AG04450 (cell line): ENCODE measurements at regions of chr14 and their contacts with region 1.

Region 1: GRCh38 chr14:35385042-35385839 is 19.3 kb downstream of the NFKBIA start:
- DNase-seq: no peak
- H3K4me3 ChIP-seq: no peak overlapping the region
- H3K27ac ChIP-seq: peak overlapping the region; percentile 98
- H3K27me3 ChIP-seq: no peaks in the 10 kb centered on the region
- CTCF ChIP-seq: no peak

Region 2: GRCh38 chr14:35222872-35223466 is 162.3 kb before region 1 on chr14:
- CTCF ChIA-PET with region 1: no interaction called
- POLR2A ChIA-PET with region 1: no interaction called
- DNase-seq: no peak
- H3K4me3 ChIP-seq: no peak overlapping the region
- H3K27ac ChIP-seq: no peak overlapping the region
- H3K27me3 ChIP-seq: no peaks in the 10 kb centered on the region
- CTCF ChIP-seq: no peak

Region 3: GRCh38 chr14:35395283-35395682 is 10.0 kb after region 1 on chr14:
- CTCF ChIA-PET with region 1: interaction called, 13 read pairs
- POLR2A ChIA-PET with region 1: interaction called, 3 read pairs
- DNase-seq: no peak
- H3K4me3 ChIP-seq: no peak overlapping the region
- H3K27ac ChIP-seq: no peak overlapping the region
- H3K27me3 ChIP-seq: no peaks in the 10 kb centered on the region
- CTCF ChIP-seq: no peak